WTC11 (cell line): ENCODE measurements at regions of chr7 and their contacts with region 1.

Region 1: GRCh38 chr7:151782598-151783448 is 94.1 kb downstream of the PRKAG2 start:
- DNase-seq: peak; percentile 89
- ATAC-seq: peak; percentile 97
- H3K4me3 Mint-ChIP-seq: peak overlapping the region; percentile 61
- H3K27ac Mint-ChIP-seq: no peak overlapping the region
- H3K4me1 Mint-ChIP-seq: no peaks in the 10 kb centered on the region
- H3K27me3 Mint-ChIP-seq: peaks cover 19% of the 10 kb centered on the region
- CTCF ChIP-seq: peak; percentile 85

Region 2: DNA sequence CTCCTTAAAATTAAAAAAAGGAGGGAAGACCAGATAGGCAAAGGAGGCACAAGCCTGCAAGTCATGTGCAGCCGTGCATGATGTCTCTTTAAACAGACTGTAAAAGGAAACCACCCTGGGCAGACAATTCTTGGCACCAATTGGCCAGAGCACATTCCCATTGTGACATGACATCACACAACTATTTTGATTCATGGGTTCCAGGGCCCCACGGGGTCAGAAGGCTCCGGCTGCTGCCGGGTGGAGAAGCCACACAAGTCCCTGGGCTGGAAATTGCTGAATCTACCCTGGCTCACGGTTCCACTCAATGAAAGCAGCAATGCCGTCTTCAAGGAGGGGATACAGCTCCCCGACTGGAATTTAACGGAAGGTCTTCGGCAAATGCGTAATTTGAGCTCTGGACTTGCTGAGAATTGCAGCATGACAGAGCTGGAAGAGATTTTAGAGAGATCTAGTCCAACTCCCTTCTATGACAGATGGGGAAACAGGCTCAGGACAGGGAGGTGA is 46.4 kb before region 1 on chr7:
- CTCF ChIA-PET with region 1: interaction called, 15 read pairs
- POLR2A ChIA-PET with region 1: no interaction called
- DNase-seq: no peak
- ATAC-seq: peak; percentile 74
- H3K4me3 Mint-ChIP-seq: peak overlapping the region; percentile 25
- H3K27ac Mint-ChIP-seq: no peak overlapping the region
- H3K4me1 Mint-ChIP-seq: peaks cover 24% of the 10 kb centered on the region
- H3K27me3 Mint-ChIP-seq: no peaks in the 10 kb centered on the region; the same call in 1 of the 2 replicates
- CTCF ChIP-seq: no peak

Region 3: DNA sequence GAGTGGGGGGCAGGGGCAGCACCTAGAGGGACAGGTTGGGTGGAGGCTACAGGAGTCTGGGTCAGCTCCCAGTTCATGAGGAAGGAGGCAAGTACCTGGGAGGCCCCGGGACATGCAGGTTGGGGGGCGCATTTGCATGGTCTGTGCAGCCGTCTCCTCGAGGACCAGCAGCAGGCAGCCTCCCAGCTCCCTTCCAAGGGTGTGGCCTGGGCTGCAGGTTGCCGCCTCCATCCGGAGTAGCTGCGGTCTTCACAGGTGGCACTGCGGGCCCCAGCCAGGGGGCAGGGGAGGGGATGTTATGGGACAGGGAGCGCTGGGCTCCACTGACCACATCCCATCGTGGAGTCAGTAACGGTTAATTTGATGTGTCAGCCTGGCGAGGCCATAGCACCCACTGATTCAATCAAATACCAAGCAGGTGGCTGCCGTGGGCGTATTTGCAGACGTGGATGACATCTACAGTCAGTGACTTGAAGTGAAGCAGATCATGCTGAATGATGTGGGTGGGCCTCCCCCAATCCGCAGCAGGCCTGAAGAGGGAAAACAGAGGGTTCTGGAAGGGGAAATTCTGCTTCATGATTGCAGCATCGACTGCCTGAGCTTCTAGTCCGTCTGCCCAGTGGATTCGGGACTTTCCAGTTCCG is 12.5 kb after region 1 on chr7:
- CTCF ChIA-PET with region 1: interaction called, 70 read pairs
- POLR2A ChIA-PET with region 1: no interaction called
- DNase-seq: peak; percentile 9
- ATAC-seq: no peak
- H3K4me3 Mint-ChIP-seq: no peak overlapping the region
- H3K27ac Mint-ChIP-seq: no peak overlapping the region
- H3K4me1 Mint-ChIP-seq: peaks cover 25% of the 10 kb centered on the region
- H3K27me3 Mint-ChIP-seq: no peaks in the 10 kb centered on the region
- CTCF ChIP-seq: no peak

Region 4: GRCh38 chr7:151863386-151864079 is 80.7 kb after region 1 on chr7:
- CTCF ChIA-PET with region 1: interaction called, 13 read pairs
- POLR2A ChIA-PET with region 1: no interaction called
- DNase-seq: peak; percentile 37
- ATAC-seq: peak; percentile 84
- H3K4me3 Mint-ChIP-seq: no peak overlapping the region
- H3K27ac Mint-ChIP-seq: no peak overlapping the region
- H3K4me1 Mint-ChIP-seq: peaks cover 11% of the 10 kb centered on the region
- H3K27me3 Mint-ChIP-seq: no peaks in the 10 kb centered on the region
- CTCF ChIP-seq: no peak

Region 5: GRCh38 chr7:151936207-151936606 is 153.4 kb after region 1 on chr7:
- CTCF ChIA-PET with region 1: interaction called, 13 read pairs
- POLR2A ChIA-PET with region 1: no interaction called
- DNase-seq: no peak
- ATAC-seq: no peak
- H3K4me3 Mint-ChIP-seq: no peak overlapping the region
- H3K27ac Mint-ChIP-seq: no peak overlapping the region
- H3K4me1 Mint-ChIP-seq: peaks cover 7% of the 10 kb centered on the region
- H3K27me3 Mint-ChIP-seq: no peaks in the 10 kb centered on the region; the same call in 1 of the 2 replicates
- CTCF ChIP-seq: no peak